ENCODE measurements at regions of chr2 and their contacts with region 1.

Region 1: DNA sequence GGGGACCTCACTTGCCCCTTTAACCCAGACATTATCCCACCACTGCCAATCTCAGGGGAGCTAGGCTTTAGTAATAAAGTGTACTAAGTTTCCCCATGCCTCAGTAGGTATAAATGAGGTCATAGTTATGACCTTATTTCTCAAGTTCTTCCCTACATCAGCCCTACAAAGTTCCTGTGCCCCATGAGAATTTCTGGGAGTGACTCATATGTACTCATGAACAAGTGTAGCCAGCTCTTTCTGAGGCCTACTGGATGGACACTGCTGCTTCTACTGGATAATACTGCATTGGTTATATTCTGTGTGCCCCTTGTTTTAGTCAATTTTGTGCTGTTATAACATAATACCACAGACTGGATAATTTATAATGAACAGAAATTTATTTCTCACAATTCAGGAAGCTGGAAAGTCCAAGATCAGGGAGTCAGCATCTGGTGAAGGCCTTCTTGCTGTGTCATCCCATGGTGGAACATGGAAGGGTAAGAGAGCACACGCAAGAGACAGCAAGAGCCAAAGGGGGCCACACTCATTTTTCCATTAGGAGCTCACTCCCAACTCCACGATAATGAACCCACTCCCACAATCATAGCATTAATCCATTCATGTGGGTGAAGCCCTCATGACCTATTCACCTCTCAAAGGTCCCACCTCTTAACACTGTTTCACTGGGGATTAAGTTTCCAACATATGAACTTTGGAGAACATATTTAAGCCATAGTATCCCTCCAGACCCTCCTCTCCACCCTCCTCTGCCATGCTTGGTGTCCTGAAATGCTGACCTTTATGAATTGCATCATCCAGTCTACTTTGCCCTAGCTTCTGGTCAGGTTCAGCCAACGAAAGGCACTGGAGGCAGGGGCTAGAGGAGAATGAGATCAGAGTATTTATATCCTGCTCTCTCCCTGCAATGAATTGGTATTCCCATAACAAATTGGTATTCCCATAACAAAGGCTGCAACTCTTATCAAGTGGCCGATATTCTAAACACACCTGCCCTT is 25.4 kb upstream of the ST3GAL5 start:
- DNase-seq: no peak
- ATAC-seq: no peak
- H3K4me3 ChIP-seq: no peak overlapping the region
- H3K4me3 Mint-ChIP-seq: no peak overlapping the region
- H3K27ac ChIP-seq: no peak overlapping the region
- H3K27ac Mint-ChIP-seq: no peak overlapping the region
- H3K4me1 ChIP-seq: no peaks in the 10 kb centered on the region
- H3K4me1 Mint-ChIP-seq: no peaks in the 10 kb centered on the region
- H3K27me3 ChIP-seq: no peaks in the 10 kb centered on the region
- H3K27me3 Mint-ChIP-seq: no peaks in the 10 kb centered on the region
- CTCF ChIP-seq: no peak

Region 2: GRCh38 chr2:85900366-85900765 is 13.8 kb before region 1 on chr2:
- CTCF ChIA-PET with region 1: interaction called, 4 read pairs
- POLR2A ChIA-PET with region 1: no interaction called
- intact Hi-C with region 1: loop called in 1 of 2 experiments (anchors 1 kb)
- DNase-seq: peak in 1 of 9 experiments; percentile 40
- ATAC-seq: peak; percentile 58
- H3K4me3 ChIP-seq: no peak overlapping the region
- H3K4me3 Mint-ChIP-seq: no peak overlapping the region
- H3K27ac ChIP-seq: peak overlapping the region in 1 of 2 experiments; percentile 32
- H3K27ac Mint-ChIP-seq: peak overlapping the region; percentile 70
- H3K4me1 ChIP-seq: peaks cover 23% of the 10 kb centered on the region
- H3K4me1 Mint-ChIP-seq: peaks cover 33% of the 10 kb centered on the region
- H3K27me3 ChIP-seq: no peaks in the 10 kb centered on the region
- H3K27me3 Mint-ChIP-seq: no peaks in the 10 kb centered on the region
- CTCF ChIP-seq: no peak